ENCODE measurements at regions of chr4 and their contacts with region 1.

Region 1: DNA sequence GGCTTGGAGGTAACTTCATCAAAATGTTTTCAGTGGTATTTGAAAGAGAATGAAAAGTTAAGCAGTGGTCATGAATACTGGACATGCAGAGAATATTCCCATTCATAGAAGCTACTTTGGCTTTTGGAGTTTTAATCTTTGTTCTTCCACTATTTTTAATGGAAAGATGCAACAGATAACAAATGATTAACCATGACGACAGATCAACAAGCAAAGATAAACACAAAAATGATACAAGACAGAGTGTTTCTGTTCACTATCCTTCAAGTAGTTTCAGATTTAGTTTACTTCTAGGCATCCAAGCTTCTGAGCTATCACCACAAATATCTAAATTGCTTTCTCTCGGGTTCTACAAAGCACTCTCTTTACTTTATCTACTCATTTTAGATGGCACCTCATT is 1004.9 kb upstream of the ADGRL3 start:
- DNase-seq: no peak

Region 2: DNA sequence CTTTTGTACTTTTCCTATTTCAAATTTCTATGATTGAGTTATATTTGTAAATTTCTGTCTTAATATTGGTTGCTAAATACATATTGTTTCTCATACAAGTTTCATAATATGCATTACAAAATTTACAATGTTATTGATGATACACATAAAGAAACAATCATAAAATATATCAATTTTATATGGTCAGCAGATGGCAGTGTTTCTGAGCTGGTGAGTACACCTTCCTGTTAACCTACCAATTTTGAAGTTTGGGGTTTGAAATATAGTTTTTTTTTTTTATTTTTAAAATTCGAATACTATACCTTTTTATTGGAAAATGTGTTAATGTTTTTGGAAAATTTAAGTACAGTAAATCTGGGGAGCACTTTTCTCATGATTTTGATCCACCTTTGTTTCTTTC is 948.2 kb before region 1 on chr4:
- intact Hi-C with region 1: loop called (anchors 10 kb)
- DNase-seq: no peak

Measured in head of caudate nucleus (tissue), 42 donors.